ENCODE measurements at regions of chr2 and their contacts with region 1.

Region 1: DNA sequence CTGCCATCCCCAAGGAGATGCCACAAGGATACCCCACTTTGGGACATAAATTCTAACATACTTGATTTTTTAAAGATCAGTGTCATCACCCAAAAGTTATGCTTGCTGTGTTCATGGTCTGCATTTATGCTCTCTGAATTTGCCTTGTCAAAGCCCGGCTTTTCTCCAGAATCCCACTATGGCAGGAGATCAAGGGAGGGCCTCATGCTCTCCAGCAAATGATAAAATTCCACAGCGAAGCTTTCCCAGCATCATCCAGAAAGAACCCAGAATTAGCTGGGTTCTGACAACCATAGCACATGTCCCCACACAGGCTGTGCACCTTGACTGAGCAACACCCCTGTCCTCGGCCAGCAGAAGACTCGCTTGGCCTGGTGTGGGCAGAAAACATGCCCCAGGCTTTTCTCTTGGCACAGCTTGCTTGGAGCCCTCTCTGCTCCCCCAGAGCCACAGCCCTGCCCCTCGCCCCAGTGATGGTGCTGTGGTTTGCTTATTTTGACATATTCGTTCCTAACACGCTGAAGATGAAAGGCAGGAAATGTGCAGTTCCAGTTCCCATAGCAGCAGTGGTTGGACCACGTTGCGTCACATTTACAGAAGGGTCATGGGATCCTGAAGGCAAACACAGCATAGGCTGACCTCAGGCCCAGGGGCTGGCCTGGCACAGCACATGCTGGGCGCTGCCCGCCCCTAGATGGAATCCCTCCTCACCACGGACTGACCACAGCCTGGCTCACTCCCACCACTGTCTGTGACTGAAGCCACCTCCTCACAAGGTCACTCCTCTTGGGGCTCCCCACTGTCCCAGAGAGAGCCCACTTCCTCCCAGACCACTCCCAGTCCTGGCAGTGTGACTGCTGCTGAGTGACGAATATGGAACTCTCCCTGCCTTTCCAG is 14.1 kb upstream of the CHRNA1 start:
- DNase-seq: no peak
- H3K4me3 ChIP-seq: no peak overlapping the region
- H3K27ac ChIP-seq: no peak overlapping the region
- H3K4me1 ChIP-seq: peaks cover 0 to 15% (median 4%) of the 10 kb centered on the region in 4 experiments
- H3K27me3 ChIP-seq: no peaks in the 10 kb centered on the region
- CTCF ChIP-seq: no peak
- EP300 ChIP-seq: no peak
- POLR2A ChIP-seq: no peak
- RAD21 ChIP-seq: no peak

Region 2: GRCh38 chr2:174688079-174688478 is 90.3 kb before region 1 on chr2:
- CTCF ChIA-PET with region 1: interaction called, 11 read pairs
- POLR2A ChIA-PET with region 1: no interaction called
- DNase-seq: no peak
- H3K4me3 ChIP-seq: no peak overlapping the region
- H3K27ac ChIP-seq: no peak overlapping the region
- H3K4me1 ChIP-seq: peaks cover under 1 to 6% (median 2%) of the 10 kb centered on the region in 4 experiments; a peak in 4 of 7 replicates
- H3K27me3 ChIP-seq: peaks cover 0 to 11% (median 5%) of the 10 kb centered on the region in 4 experiments; a peak in 6 of 7 replicates
- CTCF ChIP-seq: no peak; a peak in 1 of 4 replicates
- EP300 ChIP-seq: no peak
- POLR2A ChIP-seq: no peak
- RAD21 ChIP-seq: no peak; a peak in 1 of 4 replicates

Region 3: GRCh38 chr2:174764280-174765255 is 13.8 kb before region 1 on chr2 and contains the start of gene CHRNA1:
- CTCF ChIA-PET with region 1: interaction called, 55 read pairs
- POLR2A ChIA-PET with region 1: interaction called, 3 read pairs
- DNase-seq: no peak
- H3K4me3 ChIP-seq: no peak within 1 kb of the TSS
- H3K27ac ChIP-seq: no peak within 1 kb of the TSS
- H3K4me1 ChIP-seq: peaks cover 0 to 7% (median under 1%) of the 10 kb centered on the region in 4 experiments; a peak in 5 of 7 replicates
- H3K27me3 ChIP-seq: no peaks in the 10 kb centered on the region; a peak in 1 of 7 replicates
- CTCF ChIP-seq: no peak
- EP300 ChIP-seq: no peak
- POLR2A ChIP-seq: no peak
- RAD21 ChIP-seq: no peak
- total RNA-seq, gene CHRNA1: 0.15 TPM in 1 of 2 replicates, not detected in the other

Region 4: DNA sequence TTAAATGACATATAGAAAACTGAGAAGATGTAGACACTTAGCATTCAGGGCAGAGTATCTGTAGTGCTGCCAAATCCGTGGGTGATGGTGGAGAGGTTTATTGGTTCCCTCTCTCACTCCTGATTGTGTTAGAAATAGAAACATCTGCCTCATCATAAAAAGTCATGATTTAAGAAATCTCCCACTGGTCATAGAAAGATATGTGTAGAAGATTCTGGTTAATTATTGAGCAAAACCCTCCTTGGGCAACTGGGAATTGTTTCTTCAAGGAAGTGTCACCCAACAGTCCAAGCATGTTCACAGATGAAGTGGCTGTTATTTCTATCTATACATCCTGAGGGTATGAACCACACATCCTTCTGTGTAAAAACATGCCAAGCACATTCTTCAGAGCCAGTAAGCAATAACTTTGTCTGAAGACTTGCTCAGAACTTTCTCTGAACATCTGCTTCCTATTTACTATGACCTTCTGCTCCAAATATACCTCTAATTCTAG is 19.5 kb after region 1 on chr2:
- CTCF ChIA-PET with region 1: interaction called, 82 read pairs
- POLR2A ChIA-PET with region 1: interaction called, 5 read pairs
- DNase-seq: no peak
- H3K4me3 ChIP-seq: no peak overlapping the region
- H3K27ac ChIP-seq: 0 out of 2 replicates have a peak overlapping the region, but pooled peaks have one; percentile 4
- H3K4me1 ChIP-seq: peaks cover 6 to 22% (median 13%) of the 10 kb centered on the region in 4 experiments; a peak in 5 of 7 replicates
- H3K27me3 ChIP-seq: peaks cover 0 to 1% (median 0%) of the 10 kb centered on the region in 4 experiments; a peak in 1 of 7 replicates
- CTCF ChIP-seq: no peak
- EP300 ChIP-seq: no peak
- POLR2A ChIP-seq: 0 out of 3 replicates have a peak, but pooled peaks of 1 of the 2 experiments have one; percentile 28
- RAD21 ChIP-seq: no peak

Region 5: DNA sequence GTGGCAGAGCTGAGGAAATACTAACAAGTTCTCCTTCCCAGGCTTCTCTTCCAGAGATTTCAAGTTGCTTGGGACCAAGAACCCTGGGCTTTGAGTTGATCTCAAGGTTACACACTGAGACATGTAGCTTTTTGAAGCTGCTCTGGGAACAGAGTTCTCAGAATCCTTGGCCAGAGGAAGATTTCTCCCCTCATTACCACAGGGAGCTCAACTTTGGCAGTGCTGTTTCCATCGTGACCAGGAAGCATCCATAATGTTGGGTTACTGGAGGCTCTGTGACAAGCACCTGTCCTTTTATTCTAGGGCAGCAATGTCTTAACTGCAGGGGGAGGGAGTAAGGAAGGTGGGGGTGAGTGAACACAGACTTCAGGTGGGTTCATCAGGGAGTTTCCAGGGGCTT is 27.5 kb after region 1 on chr2:
- CTCF ChIA-PET with region 1: interaction called, 16 read pairs
- POLR2A ChIA-PET with region 1: no interaction called
- DNase-seq: no peak
- H3K4me3 ChIP-seq: no peak overlapping the region
- H3K27ac ChIP-seq: no peak overlapping the region
- H3K4me1 ChIP-seq: 0 out of 7 replicates have a peak, but pooled peaks cover 0 to 2% (median 0%) of the 10 kb centered on the region in 4 experiments
- H3K27me3 ChIP-seq: no peaks in the 10 kb centered on the region
- CTCF ChIP-seq: no peak
- EP300 ChIP-seq: no peak
- POLR2A ChIP-seq: no peak
- RAD21 ChIP-seq: no peak

Region 6: DNA sequence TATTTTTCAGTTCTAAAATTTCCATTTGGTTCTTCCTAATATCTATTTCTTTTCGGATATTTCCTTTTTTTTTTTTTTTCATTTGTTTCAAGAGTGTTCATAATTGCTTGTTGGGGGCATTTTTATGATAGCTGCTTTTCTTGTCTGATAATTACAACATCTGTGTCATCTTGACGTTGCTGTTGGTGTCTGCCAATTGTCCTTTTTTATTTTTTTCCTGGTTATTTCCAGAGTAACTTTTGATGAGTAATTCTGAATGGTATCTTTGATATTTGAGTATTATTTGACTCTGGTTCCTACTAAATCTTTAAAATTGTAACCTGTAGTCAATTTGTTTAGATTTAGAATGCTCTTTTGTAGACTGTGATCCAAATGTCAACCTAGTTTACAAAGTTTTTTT is 37.2 kb after region 1 on chr2:
- CTCF ChIA-PET with region 1: interaction called, 20 read pairs
- POLR2A ChIA-PET with region 1: no interaction called
- DNase-seq: no peak
- H3K4me3 ChIP-seq: no peak overlapping the region
- H3K27ac ChIP-seq: no peak overlapping the region
- H3K4me1 ChIP-seq: peaks cover 0 to 3% (median 0%) of the 10 kb centered on the region in 4 experiments; a peak in 2 of 7 replicates
- H3K27me3 ChIP-seq: no peaks in the 10 kb centered on the region
- CTCF ChIP-seq: no peak
- EP300 ChIP-seq: no peak
- POLR2A ChIP-seq: no peak
- RAD21 ChIP-seq: no peak

Region 7: GRCh38 chr2:174844295-174844708 is 66.0 kb after region 1 on chr2:
- CTCF ChIA-PET with region 1: interaction called, 13 read pairs
- POLR2A ChIA-PET with region 1: no interaction called
- DNase-seq: no peak
- H3K4me3 ChIP-seq: no peak overlapping the region
- H3K27ac ChIP-seq: no peak overlapping the region
- H3K4me1 ChIP-seq: peaks cover 2 to 18% (median 12%) of the 10 kb centered on the region in 4 experiments; a peak in 3 of 7 replicates
- H3K27me3 ChIP-seq: no peaks in the 10 kb centered on the region
- CTCF ChIP-seq: no peak
- EP300 ChIP-seq: no peak
- POLR2A ChIP-seq: no peak
- RAD21 ChIP-seq: no peak

Region 8: GRCh38 chr2:175048275-175048674 is 269.9 kb after region 1 on chr2:
- CTCF ChIA-PET with region 1: no interaction called
- POLR2A ChIA-PET with region 1: no interaction called
- DNase-seq: no peak
- H3K4me3 ChIP-seq: no peak overlapping the region
- H3K27ac ChIP-seq: no peak overlapping the region
- H3K4me1 ChIP-seq: no peaks in the 10 kb centered on the region
- H3K27me3 ChIP-seq: no peaks in the 10 kb centered on the region
- CTCF ChIP-seq: no peak
- EP300 ChIP-seq: no peak
- POLR2A ChIP-seq: no peak
- RAD21 ChIP-seq: no peak

Measured in H1 (cell line).